Sciatic nerve (tissue), 2 donors: ENCODE measurements at regions of chr2 and their contacts with region 1.

Region 1: DNA sequence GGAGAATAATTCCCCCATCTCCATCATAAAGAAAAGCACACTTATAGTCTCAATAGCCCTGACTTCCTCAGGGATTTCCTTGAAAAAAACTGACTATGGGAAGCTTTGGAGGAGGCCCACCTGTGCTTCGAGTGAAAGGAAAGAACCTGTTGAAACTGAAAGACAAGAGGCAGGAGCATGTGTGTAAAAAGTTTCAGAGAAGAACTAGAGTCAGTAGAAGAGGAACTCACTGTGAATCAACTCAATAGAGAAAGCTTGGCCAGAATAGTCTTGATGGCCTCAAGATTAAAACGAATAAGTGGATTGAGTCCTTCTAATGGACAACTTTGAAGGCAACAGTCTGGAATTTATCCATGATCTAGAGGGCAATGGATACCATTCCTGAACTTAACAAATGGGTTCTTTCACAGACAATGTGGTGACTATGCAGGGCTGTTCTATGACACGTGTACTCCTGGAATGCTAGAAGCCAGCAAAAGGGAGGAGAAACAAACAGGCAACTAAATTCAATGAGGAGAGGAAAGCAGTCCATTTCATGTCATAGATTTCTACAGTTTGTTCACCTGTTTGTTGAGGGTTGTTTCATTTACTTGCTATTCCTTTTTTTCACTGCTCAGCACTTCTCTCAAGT is 442.3 kb downstream of the GRB14 start:
- DNase-seq: no peak
- ATAC-seq: no peak

Region 2: DNA sequence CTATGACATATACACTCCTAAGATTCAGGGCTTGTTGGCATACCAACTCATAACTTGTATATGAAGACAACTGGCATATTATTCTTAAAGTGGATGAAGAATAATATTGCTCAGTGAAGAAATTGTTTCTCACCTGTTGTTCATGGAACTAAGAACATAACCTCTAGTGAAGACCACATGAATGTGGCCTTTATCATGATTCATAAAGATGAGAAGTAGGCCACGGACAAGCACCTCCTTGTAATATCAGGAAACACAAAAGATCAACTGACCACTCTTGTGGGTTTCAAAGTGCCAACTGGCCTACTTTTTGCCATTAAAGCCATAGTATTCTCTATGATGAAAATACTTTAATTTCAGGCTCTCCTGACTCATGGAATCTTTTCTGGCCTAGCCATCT is 35.0 kb after region 1 on chr2:
- intact Hi-C with region 1: loop called (anchors 1 kb)
- DNase-seq: no peak
- ATAC-seq: no peak

Region 3: DNA sequence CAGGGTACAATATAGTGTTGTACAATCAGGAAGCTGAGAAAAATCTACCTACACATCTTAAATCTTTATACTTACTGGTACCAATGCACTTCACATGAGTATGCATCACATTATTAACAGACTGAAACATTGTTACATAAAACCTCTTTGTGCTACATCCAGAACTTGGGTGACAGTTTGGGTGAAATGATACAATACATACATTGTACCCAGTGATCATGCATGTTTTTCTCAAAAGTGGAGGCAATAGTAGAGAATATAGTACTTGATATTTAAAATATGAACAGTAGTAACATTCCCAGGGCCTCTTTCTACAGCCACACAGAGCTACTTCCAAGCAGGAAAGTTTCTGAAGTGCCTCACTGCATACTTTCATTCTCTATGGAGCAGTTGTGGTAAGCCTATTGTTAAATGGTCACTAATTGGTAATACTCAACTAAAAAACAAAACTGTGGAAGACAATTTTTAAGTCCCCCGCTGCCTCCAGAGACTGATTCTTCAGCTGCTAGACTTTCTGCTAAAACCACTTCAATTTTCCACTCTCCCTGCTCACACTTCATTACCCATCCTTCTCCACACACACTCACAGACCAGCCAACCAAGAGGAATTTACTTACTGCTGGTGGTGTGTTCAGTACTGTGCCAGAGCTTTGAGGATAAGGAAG is 465.2 kb after region 1 on chr2:
- intact Hi-C with region 1: loop called (anchors 5 kb)
- DNase-seq: no peak
- ATAC-seq: no peak

Region 4: DNA sequence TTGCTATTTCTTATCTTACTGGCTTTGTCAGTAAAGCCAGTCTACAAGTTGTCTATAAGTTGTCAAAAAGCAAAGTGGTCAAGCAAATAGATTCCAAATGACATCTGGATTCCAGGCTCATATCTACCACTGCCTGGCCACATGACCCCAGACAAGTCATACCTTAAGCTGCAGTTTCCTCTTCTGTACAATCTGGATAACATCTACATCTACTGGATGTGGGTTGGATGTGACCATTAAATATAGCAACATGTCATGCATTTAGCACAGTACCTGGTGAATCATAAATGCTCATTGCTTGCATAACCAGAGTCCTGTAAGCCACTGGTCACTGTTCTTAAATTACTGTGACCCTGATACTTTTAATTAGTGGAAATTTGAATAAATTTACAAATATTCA is 645.9 kb after region 1 on chr2:
- intact Hi-C with region 1: no loop called
- DNase-seq: no peak
- ATAC-seq: no peak